ENCODE measurements at regions of chr4 and their contacts with region 1.

Region 1: GRCh38 chr4:87679449-87680169 is 29.5 kb downstream of the DMP1 start:
- DNase-seq: peak; percentile 3
- H3K4me3 ChIP-seq: no peak overlapping the region
- H3K27ac ChIP-seq: no peak overlapping the region
- H3K4me1 ChIP-seq: no peaks in the 10 kb centered on the region
- H3K27me3 ChIP-seq: no peaks in the 10 kb centered on the region
- CTCF ChIP-seq: peak; percentile 73 to 79

Region 2: DNA sequence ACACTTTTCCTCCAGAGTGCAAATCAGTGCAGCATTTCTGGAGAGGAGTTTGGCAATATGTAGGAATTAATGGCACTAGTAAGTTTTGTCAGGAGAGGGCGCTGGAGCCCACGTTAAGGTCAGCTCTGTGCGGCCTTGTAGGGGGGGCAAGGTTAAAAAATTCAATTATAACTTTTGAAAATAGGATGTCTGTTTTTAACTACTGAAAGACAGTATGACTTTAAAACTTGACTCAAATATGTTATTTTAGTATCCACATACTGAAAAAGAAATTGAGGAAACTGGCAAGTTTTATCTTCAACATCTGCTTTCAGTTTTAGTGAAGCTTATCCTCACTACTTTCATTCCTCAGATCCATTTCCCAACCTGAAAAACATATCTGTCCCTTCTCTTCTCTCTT is 326.0 kb before region 1 on chr4:
- CTCF ChIA-PET with region 1: no interaction called
- dilution Hi-C with region 1: no loop called
- in situ Hi-C with region 1: no loop called
- intact Hi-C with region 1: loop called (anchors 10 kb)
- DNase-seq: peak; percentile 29
- H3K4me3 ChIP-seq: no peak overlapping the region
- H3K27ac ChIP-seq: no peak overlapping the region
- H3K4me1 ChIP-seq: peaks cover 7% of the 10 kb centered on the region
- H3K27me3 ChIP-seq: no peaks in the 10 kb centered on the region
- CTCF ChIP-seq: peak; percentile 56 to 76

Region 3: GRCh38 chr4:87543835-87544461 is 135.7 kb before region 1 on chr4:
- CTCF ChIA-PET with region 1: interaction called, 7 read pairs
- dilution Hi-C with region 1: no loop called
- in situ Hi-C with region 1: no loop called
- intact Hi-C with region 1: loop called (anchors 5 kb)
- DNase-seq: peak; percentile 49
- H3K4me3 ChIP-seq: no peak overlapping the region
- H3K27ac ChIP-seq: no peak overlapping the region
- H3K4me1 ChIP-seq: no peaks in the 10 kb centered on the region
- H3K27me3 ChIP-seq: no peaks in the 10 kb centered on the region
- CTCF ChIP-seq: peak; percentile 53 to 75

Region 4: GRCh38 chr4:87633243-87633642 is 46.4 kb before region 1 on chr4:
- CTCF ChIA-PET with region 1: no interaction called
- dilution Hi-C with region 1: no loop called
- in situ Hi-C with region 1: no loop called
- intact Hi-C with region 1: no loop called
- DNase-seq: no peak
- H3K4me3 ChIP-seq: no peak overlapping the region
- H3K27ac ChIP-seq: no peak overlapping the region
- H3K4me1 ChIP-seq: no peaks in the 10 kb centered on the region
- H3K27me3 ChIP-seq: peaks cover 2% of the 10 kb centered on the region
- CTCF ChIP-seq: no peak

Region 5: DNA sequence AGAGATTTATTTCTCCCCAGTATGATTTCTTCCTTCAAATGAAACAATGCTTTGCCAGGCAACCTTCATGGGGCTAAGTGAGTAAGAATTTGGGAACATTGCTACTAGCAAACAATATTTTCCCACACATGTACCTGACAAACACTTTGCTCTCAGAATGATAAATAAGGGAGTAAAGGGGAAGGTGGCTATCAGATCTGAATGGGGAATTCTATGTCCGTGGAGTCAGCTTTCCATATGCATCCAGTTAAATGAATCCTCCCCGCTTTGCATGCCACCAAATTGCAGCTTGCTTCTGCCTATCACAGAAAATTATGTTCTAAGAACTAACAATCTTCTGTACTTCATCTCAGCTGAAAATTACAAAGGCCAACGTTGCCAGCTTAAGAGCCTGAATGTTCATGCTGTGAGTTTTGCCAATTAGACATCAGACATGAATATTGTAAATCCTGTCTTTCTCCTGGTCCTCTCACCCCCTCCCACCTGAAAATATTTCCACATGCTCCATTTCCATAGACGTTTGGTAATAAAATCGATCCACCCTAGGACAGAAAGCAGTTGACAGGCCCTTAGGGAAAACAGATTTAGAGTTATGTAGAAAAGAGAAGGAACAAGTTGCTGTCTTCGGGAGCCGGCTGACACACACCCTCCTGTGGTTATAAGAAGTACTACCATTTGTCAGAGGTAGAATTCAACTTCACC is 159.4 kb after region 1 on chr4:
- CTCF ChIA-PET with region 1: interaction called, 3 read pairs
- dilution Hi-C with region 1: no loop called
- in situ Hi-C with region 1: loop called (anchors 5 kb)
- intact Hi-C with region 1: loop called (anchors 1 kb)
- DNase-seq: peak; percentile 23
- H3K4me3 ChIP-seq: no peak overlapping the region
- H3K27ac ChIP-seq: no peak overlapping the region
- H3K4me1 ChIP-seq: peaks cover 2% of the 10 kb centered on the region
- H3K27me3 ChIP-seq: no peaks in the 10 kb centered on the region
- CTCF ChIP-seq: peak; percentile 60 to 79

Region 6: DNA sequence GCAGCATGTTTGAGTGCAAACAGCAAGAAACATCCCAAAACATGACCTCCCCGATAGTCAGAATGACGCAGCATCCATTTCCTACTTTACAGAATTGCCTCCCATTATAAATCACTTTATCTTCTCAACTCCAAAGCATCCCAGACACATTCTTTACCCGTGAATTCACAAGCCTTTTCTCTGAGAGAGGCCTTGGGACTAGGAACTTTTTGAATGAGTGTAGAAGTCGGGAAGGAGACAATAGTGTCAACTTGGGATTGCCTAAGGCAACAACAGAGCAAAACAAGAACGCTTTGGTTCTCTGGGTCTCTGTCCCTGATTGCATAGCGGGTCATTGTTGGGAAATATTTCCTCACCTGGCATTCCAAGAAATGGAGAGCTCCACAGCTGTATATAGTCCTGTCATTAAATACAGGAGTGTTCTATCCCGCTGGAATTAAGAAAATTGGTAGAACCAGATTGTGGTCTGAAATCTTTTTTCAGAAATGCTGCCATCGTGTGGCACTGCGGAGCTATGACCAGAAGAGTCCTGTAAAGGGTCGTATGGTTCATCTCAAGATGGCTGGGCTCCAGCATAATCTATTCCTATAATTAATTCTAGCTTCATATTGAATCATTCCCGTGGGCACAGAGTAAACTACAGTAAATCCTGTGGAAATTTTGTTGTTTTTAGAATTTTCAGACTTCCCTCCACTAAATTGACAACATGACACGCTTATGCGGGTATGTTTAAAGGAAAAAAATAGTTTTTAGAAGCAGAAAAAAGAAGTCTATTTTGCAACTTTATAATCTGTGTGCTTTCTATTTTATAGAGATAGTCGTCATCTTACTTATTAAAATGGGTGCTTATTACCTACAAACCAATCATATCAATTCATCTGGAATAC is 293.9 kb after region 1 on chr4:
- CTCF ChIA-PET with region 1: no interaction called
- dilution Hi-C with region 1: no loop called
- in situ Hi-C with region 1: loop called in 1 of 2 experiments (anchors 25 kb)
- intact Hi-C with region 1: loop called (anchors 5 kb)
- DNase-seq: peak; percentile 79
- H3K4me3 ChIP-seq: peak overlapping the region; percentile 12 to 30 (median 23)
- H3K27ac ChIP-seq: peak overlapping the region; percentile 41
- H3K4me1 ChIP-seq: peaks cover 17% of the 10 kb centered on the region
- H3K27me3 ChIP-seq: no peaks in the 10 kb centered on the region
- CTCF ChIP-seq: peak; percentile 75 to 82

Measured in mammary epithelial cell (primary cell).